Left colon (tissue), 2 donors: ENCODE measurements at regions of chr2 and their contacts with region 1.

Region 1: GRCh38 chr2:68121873-68122679 is 35.6 kb upstream of the PNO1 start:
- DNase-seq: peak; percentile 73 to 94
- ATAC-seq: peak; percentile 81

Region 2: GRCh38 chr2:67782443-67782842 is 339.6 kb before region 1 on chr2:
- intact Hi-C with region 1: no loop called
- DNase-seq: no peak
- ATAC-seq: no peak

Region 3: GRCh38 chr2:67997528-67997900 is 124.6 kb before region 1 on chr2:
- intact Hi-C with region 1: no loop called
- DNase-seq: no peak
- ATAC-seq: no peak

Region 4: GRCh38 chr2:68009526-68009925 is 112.5 kb before region 1 on chr2:
- intact Hi-C with region 1: no loop called
- DNase-seq: no peak
- ATAC-seq: no peak

Region 5: GRCh38 chr2:68282811-68283418 is 160.8 kb after region 1 on chr2:
- intact Hi-C with region 1: loop called in 1 of 2 experiments (anchors 5 kb)
- DNase-seq: no peak
- ATAC-seq: peak; percentile 71

Region 6: GRCh38 chr2:68441179-68441993 is 319.3 kb after region 1 on chr2:
- intact Hi-C with region 1: loop called in 1 of 2 experiments (anchors 10 kb)
- DNase-seq: peak; percentile 71 to 80
- ATAC-seq: peak; percentile 83